IMR-90 (cell line): ENCODE measurements at regions of chr5 and their contacts with region 1.

Region 1: GRCh38 chr5:34522599-34523386 is 133.3 kb upstream of the RAI14 start:
- DNase-seq: peak; percentile 92
- ATAC-seq: peak; percentile 84
- H3K4me3 ChIP-seq: no peak overlapping the region
- H3K27ac ChIP-seq: peak overlapping the region; percentile 58; the same call in 1 of the 2 replicates
- H3K4me1 ChIP-seq: peaks cover 14% of the 10 kb centered on the region
- H3K27me3 ChIP-seq: no peaks in the 10 kb centered on the region
- CTCF ChIP-seq: peak; percentile 76
- POLR2A ChIP-seq: 0 out of 2 replicates have a peak, but pooled peaks have one; percentile 29
- RAD21 ChIP-seq: peak; percentile 91

Region 2: GRCh38 chr5:34608859-34609648 is 86.3 kb after region 1 on chr5:
- CTCF ChIA-PET with region 1: interaction called, 3 read pairs
- POLR2A ChIA-PET with region 1: no interaction called
- dilution Hi-C with region 1: no loop called
- in situ Hi-C with region 1: no loop called
- intact Hi-C with region 1: loop called (anchors 5 kb)
- DNase-seq: peak; percentile 93
- ATAC-seq: peak; percentile 82
- H3K4me3 ChIP-seq: no peak overlapping the region
- H3K27ac ChIP-seq: peak overlapping the region; percentile 97
- H3K4me1 ChIP-seq: peaks cover 10% of the 10 kb centered on the region
- H3K27me3 ChIP-seq: no peaks in the 10 kb centered on the region
- CTCF ChIP-seq: no peak
- POLR2A ChIP-seq: no peak; the same call in 1 of the 2 replicates
- RAD21 ChIP-seq: no peak

Region 3: DNA sequence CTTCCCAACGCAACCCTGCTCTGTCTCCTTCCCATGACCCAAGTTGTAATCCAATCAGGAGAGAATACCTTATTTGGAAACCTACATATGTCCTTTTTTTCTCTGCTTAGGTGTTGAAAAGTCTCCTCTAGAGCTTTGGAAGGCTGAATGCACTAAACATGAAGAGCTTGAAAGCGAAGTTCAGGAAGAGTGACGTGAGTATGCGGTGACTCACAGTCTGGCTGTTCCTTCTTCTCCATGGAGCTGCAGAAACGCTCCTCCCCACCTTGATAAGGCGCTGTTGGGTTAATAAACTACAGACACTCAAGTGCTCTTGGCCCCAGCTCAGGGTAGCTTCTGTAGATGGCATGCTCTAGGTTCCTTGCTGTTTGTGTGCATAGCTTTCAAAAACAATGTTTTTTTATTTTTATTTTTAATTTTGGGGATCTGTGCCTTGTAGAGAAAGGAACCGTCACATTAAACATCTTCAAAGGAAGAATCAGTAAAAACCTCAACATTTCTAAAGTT is 164.0 kb after region 1 on chr5:
- CTCF ChIA-PET with region 1: no interaction called
- POLR2A ChIA-PET with region 1: no interaction called
- dilution Hi-C with region 1: no loop called
- in situ Hi-C with region 1: no loop called
- intact Hi-C with region 1: loop called (anchors 10 kb)
- DNase-seq: peak; percentile 99
- ATAC-seq: peak; percentile 78
- H3K4me3 ChIP-seq: no peak overlapping the region
- H3K27ac ChIP-seq: peak overlapping the region; percentile 87; the same call in 1 of the 2 replicates
- H3K4me1 ChIP-seq: peaks cover 22% of the 10 kb centered on the region
- H3K27me3 ChIP-seq: no peaks in the 10 kb centered on the region
- CTCF ChIP-seq: 0 out of 2 replicates have a peak, but pooled peaks have one; percentile 1
- POLR2A ChIP-seq: peak; percentile 74
- RAD21 ChIP-seq: peak; percentile 21